GM12878 (cell line): ENCODE measurements at regions of chr7 and their contacts with region 1.

Region 1: GRCh38 chr7:24812310-24812945 is 55.2 kb upstream of the GSDME start:
- DNase-seq: no peak
- ATAC-seq: peak; percentile 97
- H3K4me3 ChIP-seq: no peak overlapping the region
- H3K27ac ChIP-seq: no peak overlapping the region
- H3K4me1 ChIP-seq: no peaks in the 10 kb centered on the region
- H3K27me3 ChIP-seq: no peaks in the 10 kb centered on the region
- CTCF ChIP-seq: peak; percentile 78 to 81 (median 81)
- EP300 ChIP-seq: no peak
- POLR2A ChIP-seq: no peak
- RAD21 ChIP-seq: peak; percentile 78

Region 2: DNA sequence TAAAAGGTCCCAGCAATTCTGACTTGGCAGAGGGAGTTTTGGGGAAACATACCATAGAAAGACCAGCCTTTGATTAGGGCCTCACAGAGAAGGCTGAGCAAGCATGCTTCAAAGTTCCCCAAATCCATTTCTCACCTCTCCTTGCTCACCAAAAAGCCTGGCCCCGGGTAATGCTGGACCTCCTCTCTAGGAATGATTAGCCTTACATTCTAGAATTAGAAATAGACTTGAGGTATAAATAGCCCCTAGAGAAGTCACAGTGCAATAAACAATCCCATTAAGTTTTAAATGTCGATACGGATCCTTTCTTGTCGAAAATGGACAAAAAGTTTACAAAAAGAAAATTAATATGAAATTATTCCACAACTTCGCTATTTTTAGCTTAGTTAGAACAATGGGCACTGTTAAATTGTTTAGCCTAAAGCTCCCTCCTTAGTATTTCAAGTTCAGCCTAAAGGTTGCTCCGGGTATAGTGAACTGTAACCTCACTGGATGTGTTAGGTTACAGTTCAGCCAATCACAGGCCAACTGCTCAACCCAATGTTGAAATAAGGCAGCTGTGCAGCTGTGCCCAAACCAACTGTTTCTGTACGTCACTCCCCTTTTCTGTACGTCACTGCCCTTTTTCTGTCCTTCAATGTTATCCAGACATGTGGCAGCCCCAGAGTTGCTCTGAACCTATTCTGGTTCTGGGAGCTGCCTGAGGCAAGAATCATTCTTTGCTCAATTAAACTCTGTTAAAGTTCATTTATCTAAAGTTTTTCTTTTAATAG is 47.3 kb before region 1 on chr7:
- CTCF ChIA-PET with region 1: interaction called, 11 read pairs
- POLR2A ChIA-PET with region 1: no interaction called
- RAD21 ChIA-PET with region 1: no interaction called
- SMC1A ChIA-PET with region 1: interaction called, 6 read pairs
- in situ Hi-C with region 1: no loop called
- intact Hi-C with region 1: no loop called
- DNase-seq: no peak
- ATAC-seq: no peak
- H3K4me3 ChIP-seq: no peak overlapping the region
- H3K27ac ChIP-seq: no peak overlapping the region
- H3K4me1 ChIP-seq: peaks cover 23% of the 10 kb centered on the region
- H3K27me3 ChIP-seq: no peaks in the 10 kb centered on the region
- CTCF ChIP-seq: no peak
- EP300 ChIP-seq: no peak
- POLR2A ChIP-seq: no peak
- RAD21 ChIP-seq: no peak

Region 3: DNA sequence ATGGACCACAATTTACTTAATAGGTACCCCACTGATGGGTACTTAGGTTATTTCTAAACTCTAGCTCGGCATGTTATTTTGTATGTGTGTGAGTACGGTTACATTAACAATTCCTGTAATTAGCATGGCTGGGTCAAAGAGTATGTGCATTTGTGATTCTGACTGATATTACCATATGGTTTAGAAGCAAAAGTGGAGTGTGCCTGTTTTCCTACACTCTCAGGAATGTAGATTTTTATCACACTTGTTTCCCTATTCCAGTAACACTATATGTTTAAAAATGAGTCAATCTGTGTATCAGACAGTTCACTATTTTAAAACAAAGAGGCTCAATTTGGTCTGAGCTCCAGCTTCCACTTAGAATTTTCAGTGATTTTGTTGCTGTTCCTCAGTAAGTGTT is 10.5 kb before region 1 on chr7:
- CTCF ChIA-PET with region 1: interaction called, 23 read pairs
- POLR2A ChIA-PET with region 1: no interaction called
- RAD21 ChIA-PET with region 1: interaction called, 4 read pairs
- SMC1A ChIA-PET with region 1: interaction called, 8 read pairs
- in situ Hi-C with region 1: no loop called
- intact Hi-C with region 1: no loop called
- DNase-seq: no peak
- ATAC-seq: no peak
- H3K4me3 ChIP-seq: no peak overlapping the region
- H3K27ac ChIP-seq: no peak overlapping the region
- H3K4me1 ChIP-seq: no peaks in the 10 kb centered on the region
- H3K27me3 ChIP-seq: no peaks in the 10 kb centered on the region
- CTCF ChIP-seq: no peak
- EP300 ChIP-seq: no peak
- POLR2A ChIP-seq: no peak
- RAD21 ChIP-seq: no peak

Region 4: DNA sequence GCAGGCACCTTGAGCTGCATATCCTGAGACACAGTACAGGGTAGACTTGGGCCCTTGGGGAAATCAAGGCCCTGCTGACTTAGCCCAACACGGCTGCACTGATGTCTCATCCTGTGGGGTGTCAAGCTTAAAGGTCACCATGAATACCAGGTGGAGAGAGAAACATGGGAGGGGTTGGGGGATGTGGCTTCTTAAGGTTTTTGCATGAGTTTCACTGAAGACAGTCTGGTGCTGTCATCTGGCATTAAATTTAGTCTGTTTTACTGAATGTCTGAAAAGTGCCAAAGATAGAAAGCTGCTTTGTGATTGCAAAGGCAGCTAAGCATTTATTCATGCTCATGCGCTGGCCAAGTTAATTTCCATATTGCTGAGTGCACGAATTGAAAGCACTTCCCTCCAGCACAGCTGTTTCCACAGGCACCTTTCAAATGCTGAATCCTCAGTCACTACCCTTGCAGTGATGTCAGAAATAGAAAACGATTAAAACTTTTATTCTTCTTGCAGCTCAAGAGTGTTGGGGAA is 65.4 kb after region 1 on chr7:
- CTCF ChIA-PET with region 1: interaction called, 11 read pairs
- POLR2A ChIA-PET with region 1: no interaction called
- RAD21 ChIA-PET with region 1: interaction called, 3 read pairs
- SMC1A ChIA-PET with region 1: interaction called, 4 read pairs
- in situ Hi-C with region 1: no loop called
- intact Hi-C with region 1: no loop called
- DNase-seq: peak; percentile 62
- ATAC-seq: peak; percentile 88
- H3K4me3 ChIP-seq: no peak overlapping the region; the same call in 1 of the 2 replicates
- H3K27ac ChIP-seq: peak overlapping the region; percentile 5; the same call in 1 of the 2 replicates
- H3K4me1 ChIP-seq: peaks cover 16% of the 10 kb centered on the region
- H3K27me3 ChIP-seq: no peaks in the 10 kb centered on the region
- CTCF ChIP-seq: no peak
- EP300 ChIP-seq: no peak
- POLR2A ChIP-seq: no peak
- RAD21 ChIP-seq: no peak

Region 5: DNA sequence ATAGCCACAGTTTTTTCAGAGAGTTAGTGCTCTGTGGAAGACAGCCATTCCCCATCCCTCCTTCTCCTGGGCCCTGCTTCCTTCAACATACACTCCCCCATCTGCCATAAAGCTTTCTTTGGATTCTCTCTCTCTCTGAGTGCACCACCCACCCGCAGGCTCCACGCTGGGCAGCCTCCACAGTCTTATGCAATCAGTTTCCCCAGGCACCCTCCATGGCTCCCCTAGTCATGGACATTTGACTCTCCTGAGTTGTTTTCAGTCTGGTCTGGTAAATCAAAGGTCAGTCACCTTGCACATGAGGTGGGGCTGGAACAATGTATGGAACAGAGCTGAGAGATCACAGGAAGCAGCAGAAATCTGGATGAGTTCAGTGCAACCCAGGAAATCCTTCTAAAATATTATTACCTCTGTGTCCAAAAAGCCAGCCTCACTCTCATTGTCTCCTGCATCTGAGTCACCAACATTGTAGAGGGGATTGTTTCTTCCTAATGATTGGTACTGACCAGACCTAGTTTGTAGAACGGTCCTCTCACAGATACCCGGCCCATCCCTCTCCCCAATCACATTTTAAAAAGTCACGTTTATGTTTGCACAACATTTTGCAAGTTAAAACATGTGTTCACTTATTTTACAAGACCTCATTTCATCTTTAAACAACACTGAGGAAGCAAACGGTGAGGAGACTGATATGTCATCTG is 242.5 kb after region 1 on chr7:
- CTCF ChIA-PET with region 1: interaction called, 11 read pairs
- POLR2A ChIA-PET with region 1: no interaction called
- RAD21 ChIA-PET with region 1: no interaction called
- SMC1A ChIA-PET with region 1: interaction called, 4 read pairs
- in situ Hi-C with region 1: no loop called
- intact Hi-C with region 1: no loop called
- DNase-seq: no peak
- ATAC-seq: no peak
- H3K4me3 ChIP-seq: no peak overlapping the region
- H3K27ac ChIP-seq: no peak overlapping the region
- H3K4me1 ChIP-seq: no peaks in the 10 kb centered on the region
- H3K27me3 ChIP-seq: no peaks in the 10 kb centered on the region; a peak in 1 of 4 replicates
- CTCF ChIP-seq: no peak
- EP300 ChIP-seq: no peak
- POLR2A ChIP-seq: no peak
- RAD21 ChIP-seq: no peak

Region 6: DNA sequence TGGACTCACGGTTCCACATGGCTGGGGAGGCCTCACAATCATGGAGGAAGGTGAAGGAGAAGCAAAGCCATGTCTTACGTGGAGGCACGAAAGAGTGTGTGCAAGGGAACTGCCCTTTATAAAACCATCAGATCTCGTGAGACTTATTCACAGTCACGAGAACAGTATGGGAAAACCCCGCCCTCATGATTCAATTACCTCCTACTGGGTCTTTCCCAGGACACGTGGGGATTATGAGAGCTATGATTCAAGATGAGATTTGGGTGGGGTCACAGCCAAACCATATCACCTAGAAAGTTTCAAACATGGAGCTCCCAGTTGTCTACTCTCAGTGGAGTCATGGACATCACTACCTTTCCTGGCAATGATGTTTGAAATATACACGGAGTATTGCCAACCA is 263.0 kb after region 1 on chr7:
- CTCF ChIA-PET with region 1: interaction called, 119 read pairs
- POLR2A ChIA-PET with region 1: no interaction called
- RAD21 ChIA-PET with region 1: interaction called, 42 read pairs
- SMC1A ChIA-PET with region 1: interaction called, 63 read pairs
- in situ Hi-C with region 1: no loop called
- intact Hi-C with region 1: loop called (anchors 1 kb)
- DNase-seq: no peak
- ATAC-seq: peak; percentile 54
- H3K4me3 ChIP-seq: no peak overlapping the region
- H3K27ac ChIP-seq: no peak overlapping the region
- H3K4me1 ChIP-seq: no peaks in the 10 kb centered on the region
- H3K27me3 ChIP-seq: no peaks in the 10 kb centered on the region
- CTCF ChIP-seq: no peak
- EP300 ChIP-seq: no peak
- POLR2A ChIP-seq: no peak
- RAD21 ChIP-seq: no peak

Region 7: DNA sequence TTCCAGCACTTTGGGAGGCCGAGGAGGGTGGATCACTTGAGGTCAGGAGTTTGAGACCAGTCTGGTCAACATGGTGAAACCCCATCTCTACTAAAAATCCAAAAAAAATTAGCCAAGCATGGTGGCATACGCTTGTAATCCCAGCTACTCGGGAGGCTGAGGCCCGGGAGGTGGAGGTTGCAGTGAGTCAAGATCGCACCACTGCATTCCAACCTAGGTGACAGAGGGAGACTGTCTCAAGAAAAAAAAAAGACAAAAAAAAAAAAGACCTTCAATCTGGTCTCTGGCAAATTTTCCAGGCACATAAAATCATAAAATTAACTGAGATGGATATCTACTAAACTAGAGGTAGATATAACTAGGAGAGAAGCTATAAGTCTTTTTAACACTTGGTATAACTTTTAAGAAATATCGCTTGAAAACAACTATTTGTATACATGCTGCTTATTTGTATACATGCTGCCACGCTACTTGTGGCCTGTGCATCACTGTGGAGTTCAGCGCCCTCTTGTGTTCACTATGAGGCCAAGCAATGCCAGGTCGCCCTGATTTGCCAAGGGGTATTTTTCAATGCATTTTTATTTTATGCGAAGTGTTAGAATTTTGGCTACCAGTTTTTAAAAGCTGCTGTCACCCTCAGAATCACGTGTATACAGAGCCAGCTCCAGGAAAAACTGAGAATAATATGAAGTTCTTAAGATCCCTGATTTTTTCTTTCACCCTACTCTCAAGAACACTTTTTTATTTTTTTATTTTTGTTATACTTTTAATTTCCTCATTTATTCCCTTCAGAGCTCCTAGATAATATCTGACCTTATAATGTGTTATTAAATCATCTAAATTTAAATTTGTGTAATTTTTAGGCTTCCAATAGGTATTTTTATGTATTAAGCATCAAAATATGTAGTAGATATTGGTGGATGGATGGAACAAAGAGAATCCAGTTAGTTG is 285.9 kb after region 1 on chr7:
- CTCF ChIA-PET with region 1: interaction called, 290 read pairs
- POLR2A ChIA-PET with region 1: interaction called, 4 read pairs
- RAD21 ChIA-PET with region 1: interaction called, 120 read pairs
- SMC1A ChIA-PET with region 1: interaction called, 160 read pairs
- in situ Hi-C with region 1: loop called (anchors 5 kb)
- intact Hi-C with region 1: loop called (anchors 1 kb)
- DNase-seq: no peak
- ATAC-seq: peak; percentile 79
- H3K4me3 ChIP-seq: no peak overlapping the region
- H3K27ac ChIP-seq: no peak overlapping the region
- H3K4me1 ChIP-seq: peaks cover 2% of the 10 kb centered on the region
- H3K27me3 ChIP-seq: no peaks in the 10 kb centered on the region
- CTCF ChIP-seq: peak; percentile 90 to 95 (median 91)
- EP300 ChIP-seq: no peak
- POLR2A ChIP-seq: no peak
- RAD21 ChIP-seq: peak; percentile 90